ENCODE measurements at regions of chr6 and their contacts with region 1.

Region 1: DNA sequence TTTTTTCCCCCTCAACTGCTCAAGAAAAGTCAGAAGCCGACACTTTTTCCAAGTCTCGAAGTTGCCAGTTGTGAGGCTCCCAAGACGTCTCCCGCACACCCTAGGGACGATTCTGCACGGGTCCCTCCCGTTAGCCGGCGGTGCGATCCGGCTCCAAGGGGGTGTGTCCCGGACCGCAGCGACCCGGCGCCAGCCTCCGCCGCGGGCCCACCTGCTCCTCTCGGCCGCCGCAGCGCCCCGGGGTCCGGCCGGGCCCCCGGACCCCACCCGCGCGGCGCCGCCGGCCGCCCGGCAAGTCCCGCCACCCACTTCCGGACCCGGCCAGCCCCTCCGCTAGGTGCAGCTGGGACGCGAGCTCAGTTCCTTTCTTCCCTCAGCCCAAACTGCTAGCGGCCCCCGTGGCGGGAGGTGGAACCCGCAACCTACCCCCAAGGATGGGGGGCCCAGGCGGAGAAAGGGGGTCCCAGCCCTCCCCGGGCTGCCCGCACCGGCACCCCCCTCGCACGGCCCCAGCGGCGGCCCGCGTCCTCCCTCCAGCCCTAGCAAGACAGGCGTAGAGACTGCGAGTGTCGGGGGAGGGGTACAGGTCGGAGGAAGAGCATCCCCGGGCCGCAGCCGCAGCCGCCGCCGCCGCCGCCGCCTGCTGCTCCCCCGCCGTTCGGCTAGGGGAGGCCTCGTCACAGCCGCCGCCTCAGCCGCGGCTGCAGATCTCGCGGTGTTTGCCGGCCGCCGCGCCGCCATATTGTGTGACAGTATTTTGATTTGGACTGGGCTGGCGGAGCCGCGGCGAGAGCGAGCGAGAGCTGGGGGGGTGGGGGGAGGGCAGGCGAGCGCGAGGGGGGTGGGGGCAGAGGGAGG is 485 bp upstream of the TAB2 start:
- DNase-seq: peak; percentile 89
- ATAC-seq: peak; percentile 90
- H3K4me3 ChIP-seq: peak overlapping the region; percentile 97 to 99 (median 97)
- H3K27ac ChIP-seq: peak overlapping the region; percentile 92
- H3K4me1 ChIP-seq: peaks cover 25% of the 10 kb centered on the region
- H3K27me3 ChIP-seq: peaks cover 2 to 3% of the 10 kb centered on the region in 2 experiments; a peak in 2 of 5 replicates
- CTCF ChIP-seq: peak; percentile 26
- EP300 ChIP-seq: peak in 1 of 2 experiments; percentile 38; a peak in 1 of 4 replicates
- POLR2A ChIP-seq: peak; percentile 30 to 78; a peak in 3 of 4 replicates
- RAD21 ChIP-seq: peak; percentile 68

Region 2: DNA sequence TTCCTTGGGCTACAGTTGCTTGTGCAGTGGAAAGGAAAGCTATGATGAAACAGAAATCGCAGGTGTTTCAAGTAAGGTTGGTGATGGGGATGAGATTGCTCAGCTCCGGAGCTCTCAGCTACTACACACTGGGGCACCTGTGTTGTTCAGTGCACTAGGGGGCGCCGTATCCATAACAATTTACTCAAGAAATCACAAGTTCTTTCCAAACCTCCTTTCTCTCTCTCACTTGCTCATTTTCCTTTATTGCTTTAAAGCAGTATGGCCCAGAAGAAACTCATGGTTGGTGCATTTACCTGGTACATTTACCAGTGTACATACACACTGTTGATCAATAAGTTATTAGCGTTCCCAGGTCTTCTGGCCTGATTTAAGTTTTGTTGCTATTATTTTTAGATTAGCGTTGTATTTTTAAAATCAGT is 234.7 kb before region 1 on chr6:
- CTCF ChIA-PET with region 1: no interaction called
- POLR2A ChIA-PET with region 1: no interaction called
- in situ Hi-C with region 1: no loop called
- intact Hi-C with region 1: loop called (anchors 5 kb)
- DNase-seq: peak; percentile 62
- ATAC-seq: peak; percentile 97
- H3K4me3 ChIP-seq: no peak overlapping the region
- H3K27ac ChIP-seq: no peak overlapping the region
- H3K4me1 ChIP-seq: peaks cover 23% of the 10 kb centered on the region
- H3K27me3 ChIP-seq: peaks cover 0 to 4% of the 10 kb centered on the region in 2 experiments; a peak in 1 of 5 replicates
- CTCF ChIP-seq: peak; percentile 90
- EP300 ChIP-seq: no peak
- POLR2A ChIP-seq: no peak
- RAD21 ChIP-seq: peak; percentile 91

Region 3: GRCh38 chr6:149306967-149307366 is 10.1 kb before region 1 on chr6:
- CTCF ChIA-PET with region 1: no interaction called
- POLR2A ChIA-PET with region 1: no interaction called
- in situ Hi-C with region 1: no loop called
- intact Hi-C with region 1: no loop called
- DNase-seq: no peak
- ATAC-seq: no peak
- H3K4me3 ChIP-seq: no peak overlapping the region
- H3K27ac ChIP-seq: no peak overlapping the region
- H3K4me1 ChIP-seq: no peaks in the 10 kb centered on the region
- H3K27me3 ChIP-seq: peaks cover 0 to 21% of the 10 kb centered on the region in 2 experiments; a peak in 3 of 5 replicates
- CTCF ChIP-seq: no peak
- EP300 ChIP-seq: no peak
- POLR2A ChIP-seq: no peak
- RAD21 ChIP-seq: no peak

Region 4: GRCh38 chr6:149389509-149390297 is 72.7 kb after region 1 on chr6:
- CTCF ChIA-PET with region 1: no interaction called
- POLR2A ChIA-PET with region 1: no interaction called
- in situ Hi-C with region 1: no loop called
- intact Hi-C with region 1: loop called (anchors 5 kb)
- DNase-seq: no peak
- ATAC-seq: no peak
- H3K4me3 ChIP-seq: no peak overlapping the region
- H3K27ac ChIP-seq: no peak overlapping the region
- H3K4me1 ChIP-seq: peaks cover 6% of the 10 kb centered on the region; the same call in 1 of the 2 replicates
- H3K27me3 ChIP-seq: no peaks in the 10 kb centered on the region
- CTCF ChIP-seq: no peak
- EP300 ChIP-seq: no peak
- POLR2A ChIP-seq: no peak
- RAD21 ChIP-seq: no peak

Region 5: GRCh38 chr6:149423964-149424440 is 107.0 kb after region 1 on chr6:
- CTCF ChIA-PET with region 1: no interaction called
- POLR2A ChIA-PET with region 1: no interaction called
- in situ Hi-C with region 1: no loop called
- intact Hi-C with region 1: loop called (anchors 5 kb)
- DNase-seq: no peak
- ATAC-seq: peak; percentile 18
- H3K4me3 ChIP-seq: peak overlapping the region in 2 of 3 experiments; percentile 20 to 21; a peak in 3 of 6 replicates
- H3K27ac ChIP-seq: no peak overlapping the region
- H3K4me1 ChIP-seq: peaks cover 16% of the 10 kb centered on the region
- H3K27me3 ChIP-seq: peaks cover 3 to 36% of the 10 kb centered on the region in 2 experiments; a peak in 4 of 5 replicates
- CTCF ChIP-seq: 0 out of 2 replicates have a peak, but pooled peaks have one; percentile 14
- EP300 ChIP-seq: no peak
- POLR2A ChIP-seq: no peak
- RAD21 ChIP-seq: no peak

Region 6: DNA sequence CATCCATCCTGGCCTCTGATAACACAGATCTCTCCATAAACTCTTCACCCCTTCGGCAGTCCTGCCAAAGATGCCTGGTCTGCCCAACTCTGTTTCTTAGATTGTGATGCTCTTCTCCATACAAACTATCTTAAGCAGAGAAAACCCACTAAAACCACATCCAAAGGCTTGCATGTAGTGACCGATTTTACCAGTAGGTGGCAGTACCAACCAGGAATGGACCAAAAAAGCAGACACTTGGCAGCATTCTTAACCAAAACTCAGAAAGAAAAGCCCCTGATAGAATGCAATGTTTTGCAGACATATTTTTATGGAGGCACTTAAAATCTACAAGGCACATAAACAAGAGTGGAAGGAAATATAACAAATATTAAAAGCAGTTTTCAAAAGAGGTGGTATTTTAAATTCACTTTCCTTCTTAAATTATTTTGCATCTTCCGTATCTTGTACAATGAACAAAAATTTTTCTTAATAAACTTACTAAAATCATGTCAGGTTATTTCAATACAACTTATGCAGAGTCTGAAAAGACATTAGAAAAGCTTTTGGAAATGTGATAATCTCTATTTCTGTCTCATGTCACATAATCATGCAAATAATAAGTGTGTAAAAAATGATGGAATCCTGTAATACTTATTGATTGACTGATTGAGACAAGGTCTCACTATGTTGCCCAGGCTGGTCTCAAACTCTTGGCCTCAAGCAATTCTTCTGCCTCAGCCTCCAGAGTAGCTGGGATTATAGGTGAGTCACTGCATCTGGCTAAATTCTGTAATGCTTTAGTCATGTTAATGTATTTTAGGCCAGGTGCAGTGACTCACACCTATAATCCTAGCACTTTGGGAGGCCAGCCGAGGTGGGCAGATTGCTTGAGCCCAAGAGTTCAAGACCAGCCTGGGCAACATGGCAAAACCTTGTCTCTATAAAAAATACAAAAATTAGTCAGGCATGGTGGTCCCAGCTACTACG is 517.8 kb after region 1 on chr6:
- CTCF ChIA-PET with region 1: no interaction called
- POLR2A ChIA-PET with region 1: no interaction called
- in situ Hi-C with region 1: no loop called
- intact Hi-C with region 1: no loop called
- DNase-seq: peak; percentile 64
- ATAC-seq: no peak
- H3K4me3 ChIP-seq: no peak overlapping the region
- H3K27ac ChIP-seq: no peak overlapping the region
- H3K4me1 ChIP-seq: peaks cover 25% of the 10 kb centered on the region
- H3K27me3 ChIP-seq: no peaks in the 10 kb centered on the region
- CTCF ChIP-seq: peak; percentile 87
- EP300 ChIP-seq: no peak
- POLR2A ChIP-seq: no peak
- RAD21 ChIP-seq: peak; percentile 78

Measured in HepG2 (cell line).